PC-3 (cell line): ENCODE measurements at regions of chr9 and their contacts with region 1.

Region 1: GRCh38 chr9:76403352-76403751 is 9.1 kb upstream of the RFK start:
- DNase-seq: peak; percentile 54
- ATAC-seq: peak; percentile 62
- H3K4me3 ChIP-seq: peak overlapping the region; percentile 25; the same call in 1 of the 2 replicates
- H3K27ac ChIP-seq: no peak overlapping the region
- H3K4me1 ChIP-seq: peaks cover 15% of the 10 kb centered on the region; the same call in 1 of the 2 replicates
- H3K27me3 ChIP-seq: no peaks in the 10 kb centered on the region
- CTCF ChIP-seq: peak; percentile 62

Region 2: GRCh38 chr9:76369583-76369982 is 33.8 kb before region 1 on chr9:
- CTCF ChIA-PET with region 1: no interaction called
- POLR2A ChIA-PET with region 1: no interaction called
- intact Hi-C with region 1: no loop called
- DNase-seq: peak; percentile 77
- ATAC-seq: no peak
- H3K4me3 ChIP-seq: no peak overlapping the region
- H3K27ac ChIP-seq: no peak overlapping the region
- H3K4me1 ChIP-seq: peaks cover 11% of the 10 kb centered on the region; the same call in 1 of the 2 replicates
- H3K27me3 ChIP-seq: no peaks in the 10 kb centered on the region
- CTCF ChIP-seq: no peak

Region 3: DNA sequence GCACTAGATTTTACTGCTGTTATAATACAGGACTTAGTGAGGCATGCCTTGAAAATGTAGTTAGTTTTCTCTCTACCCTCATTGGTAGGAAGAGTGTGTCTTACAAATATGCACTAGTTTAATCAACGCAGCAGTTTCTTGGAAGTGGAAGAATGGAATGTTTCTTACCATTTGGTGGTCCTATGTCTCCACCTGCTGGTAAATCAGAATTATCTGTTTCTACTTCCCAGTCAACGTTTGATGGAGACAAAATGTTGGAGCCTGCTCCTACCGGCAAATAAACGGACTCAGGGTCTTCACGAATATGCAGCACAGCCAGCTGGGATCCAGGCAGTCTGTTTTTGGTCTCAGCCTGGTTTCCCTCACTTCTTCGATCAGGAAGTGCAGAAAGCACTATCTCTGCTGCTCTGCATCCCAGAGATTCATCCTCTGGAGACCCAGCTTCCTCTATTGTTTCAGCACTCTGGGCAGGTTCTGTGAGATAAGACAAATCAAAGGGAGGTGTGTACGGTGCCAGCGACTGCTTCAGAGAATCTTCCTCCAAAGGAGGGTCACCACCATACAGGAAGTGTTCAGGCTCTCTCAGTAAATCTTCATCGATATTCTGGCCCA is 301.3 kb after region 1 on chr9:
- CTCF ChIA-PET with region 1: no interaction called
- POLR2A ChIA-PET with region 1: no interaction called
- intact Hi-C with region 1: loop called (anchors 2 kb)
- DNase-seq: peak; percentile 62
- ATAC-seq: no peak; the same call in 1 of the 2 replicates
- H3K4me3 ChIP-seq: no peak overlapping the region
- H3K27ac ChIP-seq: no peak overlapping the region
- H3K4me1 ChIP-seq: no peaks in the 10 kb centered on the region
- H3K27me3 ChIP-seq: peaks cover 46% of the 10 kb centered on the region
- CTCF ChIP-seq: peak; percentile 66